MCF 10A (cell line): ENCODE measurements at regions of chr19 and their contacts with region 1.

Region 1: DNA sequence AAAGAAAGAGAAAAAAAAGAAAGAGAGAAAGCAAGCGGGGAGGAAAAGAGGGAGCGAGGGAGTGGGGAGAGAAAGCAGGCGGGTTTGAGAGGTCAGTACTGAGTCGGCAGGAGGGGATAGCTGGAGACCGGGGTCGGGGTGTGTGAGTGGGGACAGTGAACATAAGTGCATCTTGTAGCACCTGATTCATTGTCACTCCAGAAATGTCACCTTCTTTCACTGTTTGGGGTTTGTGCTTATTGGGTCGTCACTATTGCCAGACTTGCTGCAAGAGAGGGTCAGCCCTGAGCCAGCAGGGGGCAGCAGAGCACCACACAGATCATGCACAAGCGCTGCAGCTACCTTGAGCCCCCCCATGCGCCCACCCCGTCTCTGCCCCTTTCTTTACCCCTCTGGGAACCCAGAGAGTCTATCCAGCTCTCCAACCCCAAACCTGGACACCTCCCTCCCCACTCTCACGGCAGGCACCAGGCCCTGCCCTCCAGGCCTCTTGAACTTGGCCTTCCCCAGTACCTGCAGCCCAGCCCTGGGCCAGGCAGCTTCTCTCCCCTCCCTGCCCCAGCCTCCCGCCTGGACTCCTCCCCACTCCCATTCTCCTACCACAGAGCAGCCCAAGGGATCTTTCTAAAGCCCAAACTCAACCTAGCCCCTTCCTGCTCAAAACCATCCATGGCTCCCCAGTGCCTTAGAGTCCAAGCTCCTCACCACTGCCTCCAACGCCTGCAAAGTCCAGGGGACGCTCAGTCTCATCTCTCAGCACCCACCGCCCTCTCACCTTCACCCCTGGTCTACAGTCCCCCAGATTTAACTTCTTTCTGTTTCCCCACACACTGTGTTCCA is 9.7 kb upstream of the CEACAM16 start:
- DNase-seq: peak; percentile 61
- H3K4me3 Mint-ChIP-seq: no peak overlapping the region
- H3K27ac Mint-ChIP-seq: no peak overlapping the region
- H3K4me1 Mint-ChIP-seq: peaks cover 25% of the 10 kb centered on the region
- H3K27me3 Mint-ChIP-seq: no peaks in the 10 kb centered on the region
- CTCF ChIP-seq: peak; percentile 94

Region 2: DNA sequence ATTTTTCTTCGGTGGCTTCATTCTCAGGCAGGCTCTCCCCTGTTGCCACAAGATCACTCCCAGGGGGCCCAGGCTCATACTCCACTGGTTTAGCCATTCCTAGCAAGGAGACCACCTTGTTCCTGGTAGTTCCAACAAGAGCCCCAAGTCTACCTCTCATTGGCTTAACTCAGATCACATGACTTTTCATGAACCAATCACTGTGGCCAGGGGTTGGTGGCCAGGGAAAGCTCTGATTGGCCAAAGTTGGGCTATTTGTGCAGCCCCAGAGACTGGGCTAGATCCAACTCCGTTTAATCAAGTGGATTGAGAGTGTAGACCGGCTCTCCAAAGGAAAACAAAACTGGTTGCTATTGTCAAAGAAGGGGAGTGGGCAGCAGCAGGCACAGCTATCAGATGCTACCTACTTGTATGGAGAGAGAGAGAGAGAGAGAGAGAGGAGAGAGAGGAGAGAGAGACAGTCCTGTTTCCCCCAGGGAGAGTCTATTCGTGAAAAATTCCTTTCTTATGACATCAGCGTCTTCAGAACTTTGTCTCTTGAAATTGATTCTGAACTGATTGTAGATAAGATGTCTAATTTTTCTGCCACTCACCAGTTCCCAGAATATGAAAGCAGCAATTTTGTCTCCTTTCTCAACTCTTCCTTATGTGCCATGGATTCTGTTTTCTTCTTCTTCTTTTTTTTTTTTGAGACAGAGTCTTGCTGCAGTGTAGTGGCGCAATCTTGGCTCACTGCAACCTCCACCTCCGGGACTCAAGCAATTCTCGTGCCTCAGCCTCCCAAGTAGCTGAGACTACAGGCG is 12.1 kb before region 1 on chr19:
- CTCF ChIA-PET with region 1: interaction called, 15 read pairs
- POLR2A ChIA-PET with region 1: no interaction called
- intact Hi-C with region 1: no loop called
- DNase-seq: peak; percentile 46
- H3K4me3 Mint-ChIP-seq: no peak overlapping the region
- H3K27ac Mint-ChIP-seq: no peak overlapping the region
- H3K4me1 Mint-ChIP-seq: peaks cover 7% of the 10 kb centered on the region
- H3K27me3 Mint-ChIP-seq: no peaks in the 10 kb centered on the region
- CTCF ChIP-seq: no peak

Region 3: DNA sequence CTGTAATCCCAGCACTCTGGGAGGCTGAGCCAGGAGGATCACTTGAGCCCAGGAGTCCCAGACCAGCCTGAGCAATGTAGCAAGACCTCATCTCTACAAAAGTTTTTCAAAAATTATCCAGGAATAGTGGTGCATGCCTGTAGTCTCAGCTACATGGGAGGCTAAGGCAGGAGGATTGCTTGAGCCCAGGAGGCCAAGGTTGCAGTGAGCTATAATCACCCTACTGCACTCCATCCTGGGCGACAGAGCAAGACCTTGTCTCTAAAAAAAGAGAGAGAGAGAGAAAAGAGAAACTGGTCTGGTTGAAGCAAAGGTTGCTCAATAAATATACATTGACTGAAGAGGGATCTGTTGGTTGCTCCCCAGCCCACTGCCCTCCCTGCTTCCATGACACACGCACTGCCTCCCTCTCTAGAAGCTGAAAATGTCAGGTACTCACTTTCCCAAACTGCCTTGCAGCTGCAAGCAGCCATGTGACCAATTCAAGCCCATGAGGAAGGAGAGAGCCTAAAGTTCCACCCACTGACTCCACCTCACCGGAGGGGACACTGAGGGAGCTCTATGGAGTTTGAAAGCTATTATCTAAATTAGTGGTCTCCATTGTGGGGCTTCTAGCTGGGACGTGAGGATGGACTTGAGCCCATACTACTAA is 23.7 kb after region 1 on chr19:
- CTCF ChIA-PET with region 1: interaction called, 11 read pairs
- POLR2A ChIA-PET with region 1: no interaction called
- intact Hi-C with region 1: no loop called
- DNase-seq: no peak
- H3K4me3 Mint-ChIP-seq: no peak overlapping the region
- H3K27ac Mint-ChIP-seq: no peak overlapping the region
- H3K4me1 Mint-ChIP-seq: no peaks in the 10 kb centered on the region
- H3K27me3 Mint-ChIP-seq: no peaks in the 10 kb centered on the region
- CTCF ChIP-seq: no peak